ENCODE measurements at regions of chr7 and their contacts with region 1.

Region 1: GRCh38 chr7:104089612-104090011 is 100.2 kb upstream of the RELN start:
- DNase-seq: no peak
- ATAC-seq: no peak
- H3K4me3 ChIP-seq: no peak overlapping the region
- H3K27ac ChIP-seq: no peak overlapping the region
- H3K4me1 ChIP-seq: no peaks in the 10 kb centered on the region
- H3K27me3 ChIP-seq: peaks cover 3% of the 10 kb centered on the region; the same call in 1 of the 2 replicates
- CTCF ChIP-seq: no peak
- POLR2A ChIP-seq: no peak
- RAD21 ChIP-seq: no peak

Region 2: DNA sequence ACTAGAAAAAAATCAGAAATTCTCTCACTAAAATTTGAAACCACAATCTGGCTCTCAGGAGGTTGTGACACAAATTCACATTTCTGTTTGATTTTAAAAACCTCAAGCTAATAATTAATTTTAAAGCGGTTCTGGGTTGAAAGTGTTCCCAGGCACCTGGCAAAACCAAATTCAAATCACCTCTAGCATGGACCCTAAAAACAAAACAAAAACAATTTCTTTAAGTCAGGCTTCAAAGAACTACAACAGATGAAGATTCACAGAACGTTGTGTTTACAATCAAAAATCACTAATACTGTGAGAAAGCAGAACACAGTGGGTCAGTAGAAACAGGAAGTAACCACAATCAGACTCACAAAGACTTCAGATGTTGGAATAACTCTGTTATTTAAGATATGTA is 93.0 kb before region 1 on chr7:
- CTCF ChIA-PET with region 1: no interaction called
- POLR2A ChIA-PET with region 1: no interaction called
- dilution Hi-C with region 1: no loop called
- in situ Hi-C with region 1: no loop called
- intact Hi-C with region 1: loop called (anchors 5 kb)
- DNase-seq: no peak
- ATAC-seq: no peak
- H3K4me3 ChIP-seq: no peak overlapping the region
- H3K27ac ChIP-seq: no peak overlapping the region
- H3K4me1 ChIP-seq: no peaks in the 10 kb centered on the region
- H3K27me3 ChIP-seq: no peaks in the 10 kb centered on the region
- CTCF ChIP-seq: no peak
- POLR2A ChIP-seq: no peak
- RAD21 ChIP-seq: no peak

Measured in IMR-90 (cell line).